Panc1 (cell line): ENCODE measurements at regions of chr12 and their contacts with region 1.

Region 1: GRCh38 chr12:26125400-26126339 is 833 bp upstream of the BHLHE41 start:
- DNase-seq: peak; percentile 94
- ATAC-seq: peak; percentile 80
- H3K4me3 ChIP-seq: peak overlapping the region; percentile 68 to 90
- H3K27ac ChIP-seq: peak overlapping the region; percentile 100
- H3K4me1 ChIP-seq: peaks cover 39% of the 10 kb centered on the region
- H3K27me3 ChIP-seq: peaks cover 5% of the 10 kb centered on the region; the same call in 1 of the 2 replicates
- CTCF ChIP-seq: no peak

Region 2: DNA sequence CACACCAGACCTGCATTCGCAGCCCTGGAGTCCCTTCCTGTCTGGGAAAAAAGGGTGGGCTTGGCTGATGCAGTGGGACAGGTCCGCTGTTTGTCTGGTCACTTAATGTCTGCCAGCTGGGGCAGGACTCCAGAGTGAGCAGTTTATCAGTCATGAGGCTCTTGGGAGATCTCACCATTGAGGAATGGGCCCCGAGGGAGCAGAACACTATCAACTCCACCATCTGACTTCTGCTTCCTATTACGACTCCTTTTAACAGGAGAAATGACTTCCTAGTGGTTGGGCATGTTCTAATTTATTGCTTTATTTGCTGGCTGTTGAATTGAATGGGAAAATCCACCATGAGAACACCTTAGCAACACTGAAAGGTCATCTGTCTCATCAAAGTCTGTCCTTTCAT is 349.7 kb before region 1 on chr12:
- CTCF ChIA-PET with region 1: no interaction called
- POLR2A ChIA-PET with region 1: no interaction called
- in situ Hi-C with region 1: no loop called
- intact Hi-C with region 1: no loop called
- DNase-seq: no peak
- ATAC-seq: peak; percentile 62; the same call in 1 of the 2 replicates
- H3K4me3 ChIP-seq: no peak overlapping the region
- H3K27ac ChIP-seq: no peak overlapping the region; the same call in 1 of the 2 replicates
- H3K4me1 ChIP-seq: 0 out of 2 replicates have a peak, but pooled peaks cover 2% of the 10 kb centered on the region
- H3K27me3 ChIP-seq: no peaks in the 10 kb centered on the region; the same call in 1 of the 2 replicates
- CTCF ChIP-seq: no peak

Region 3: DNA sequence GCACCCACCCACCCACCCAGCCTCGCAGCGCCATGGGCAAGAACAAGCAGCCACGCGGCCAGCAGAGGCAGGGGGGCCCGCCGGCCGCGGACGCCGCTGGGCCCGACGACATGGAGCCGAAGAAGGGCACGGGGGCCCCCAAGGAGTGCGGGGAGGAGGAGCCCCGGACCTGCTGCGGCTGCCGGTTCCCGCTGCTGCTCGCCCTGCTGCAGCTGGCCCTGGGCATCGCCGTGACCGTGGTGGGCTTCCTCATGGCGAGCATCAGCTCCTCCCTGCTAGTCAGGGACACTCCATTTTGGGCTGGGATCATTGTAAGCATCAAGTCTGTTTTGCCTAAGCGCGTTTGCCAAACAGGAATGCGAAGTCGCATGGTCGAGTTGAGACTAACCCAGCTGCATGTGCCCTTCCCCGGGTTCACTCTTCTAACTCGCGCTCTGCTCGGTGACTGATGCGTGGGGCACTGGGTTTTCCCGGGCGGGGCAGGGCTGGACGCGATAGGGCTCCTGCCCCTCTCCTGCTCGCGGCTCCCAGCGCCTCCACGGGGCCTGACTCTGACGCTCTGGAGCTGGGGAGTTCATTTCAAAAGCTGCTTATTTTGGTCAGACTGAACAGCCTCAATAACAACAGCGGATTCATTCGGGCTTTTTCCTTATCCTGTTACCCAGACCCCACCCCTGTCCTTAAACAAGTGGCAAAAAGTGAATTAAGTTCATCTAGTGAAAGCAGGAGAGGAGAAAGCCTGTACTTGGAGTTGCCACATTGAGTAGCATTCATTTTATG is 70.2 kb after region 1 on chr12:
- CTCF ChIA-PET with region 1: no interaction called
- POLR2A ChIA-PET with region 1: interaction called, 5 read pairs
- in situ Hi-C with region 1: no loop called
- intact Hi-C with region 1: loop called (anchors 2 kb)
- DNase-seq: peak; percentile 62
- ATAC-seq: peak; percentile 87
- H3K4me3 ChIP-seq: peak overlapping the region; percentile 52 to 74
- H3K27ac ChIP-seq: peak overlapping the region; percentile 98
- H3K4me1 ChIP-seq: peaks cover 41% of the 10 kb centered on the region
- H3K27me3 ChIP-seq: no peaks in the 10 kb centered on the region
- CTCF ChIP-seq: no peak

Region 4: GRCh38 chr12:26378711-26379110 is 253.0 kb after region 1 on chr12:
- CTCF ChIA-PET with region 1: no interaction called
- POLR2A ChIA-PET with region 1: no interaction called
- in situ Hi-C with region 1: no loop called
- intact Hi-C with region 1: no loop called
- DNase-seq: no peak
- ATAC-seq: no peak
- H3K4me3 ChIP-seq: no peak overlapping the region
- H3K27ac ChIP-seq: no peak overlapping the region
- H3K4me1 ChIP-seq: no peaks in the 10 kb centered on the region
- H3K27me3 ChIP-seq: no peaks in the 10 kb centered on the region
- CTCF ChIP-seq: no peak

Region 5: DNA sequence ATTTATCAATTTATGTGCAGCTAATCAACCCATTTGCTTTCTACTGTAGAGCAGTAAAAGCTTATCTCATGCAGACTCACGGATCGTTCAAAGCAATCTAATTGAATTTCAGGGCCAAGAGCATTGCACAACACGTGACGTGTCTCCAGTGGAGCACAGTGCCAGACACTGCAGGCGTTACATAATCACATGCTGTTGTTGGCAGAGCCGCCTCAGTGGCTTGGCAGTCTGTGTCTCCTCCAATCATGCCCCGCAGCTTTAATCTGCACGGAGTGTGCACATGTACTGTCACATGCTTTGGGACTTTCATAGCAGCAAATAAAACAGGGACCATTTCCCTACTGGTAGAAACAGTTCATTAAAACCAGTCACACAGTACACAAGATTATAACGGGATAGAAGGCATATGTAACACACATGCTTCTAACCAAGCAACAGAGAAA is 398.1 kb after region 1 on chr12:
- CTCF ChIA-PET with region 1: interaction called, 16 read pairs
- POLR2A ChIA-PET with region 1: interaction called, 11 read pairs
- in situ Hi-C with region 1: no loop called
- intact Hi-C with region 1: loop called (anchors 5 kb)
- DNase-seq: no peak
- ATAC-seq: peak; percentile 56
- H3K4me3 ChIP-seq: no peak overlapping the region
- H3K27ac ChIP-seq: peak overlapping the region; percentile 51
- H3K4me1 ChIP-seq: peaks cover 7% of the 10 kb centered on the region
- H3K27me3 ChIP-seq: no peaks in the 10 kb centered on the region
- CTCF ChIP-seq: no peak

Region 6: DNA sequence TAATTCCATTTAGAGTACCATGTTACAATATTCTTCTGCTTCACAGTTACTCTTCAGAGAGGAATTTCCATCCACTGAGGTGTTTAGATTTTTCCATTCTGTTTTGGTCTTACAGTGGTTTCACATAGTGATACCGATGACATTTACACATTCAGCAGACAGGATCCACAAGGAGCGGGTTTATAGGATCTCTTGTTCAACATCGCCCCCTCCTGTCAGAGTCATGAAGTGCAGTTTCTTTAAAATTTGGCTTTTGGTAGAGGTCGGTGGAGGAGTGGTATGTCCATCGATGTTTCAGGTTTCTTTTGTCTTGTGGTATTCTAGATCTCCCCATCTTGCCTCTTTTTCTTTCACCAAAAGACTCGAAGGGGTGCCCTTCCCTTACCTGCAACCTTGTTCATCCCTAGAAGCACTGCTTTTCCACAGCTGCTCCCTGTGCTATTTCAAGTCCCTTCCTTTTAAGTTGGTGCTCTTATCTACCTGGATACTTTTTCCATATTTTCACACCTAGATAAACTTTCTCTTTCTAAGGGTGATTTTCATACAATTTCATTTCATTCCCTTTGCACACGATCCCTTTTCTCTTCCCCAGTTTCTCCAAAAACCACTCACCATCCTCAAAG is 526.0 kb after region 1 on chr12:
- CTCF ChIA-PET with region 1: interaction called, 18 read pairs
- POLR2A ChIA-PET with region 1: no interaction called
- in situ Hi-C with region 1: no loop called
- intact Hi-C with region 1: loop called (anchors 2 kb)
- DNase-seq: peak; percentile 77
- ATAC-seq: peak; percentile 82
- H3K4me3 ChIP-seq: no peak overlapping the region
- H3K27ac ChIP-seq: peak overlapping the region; percentile 5
- H3K4me1 ChIP-seq: no peaks in the 10 kb centered on the region
- H3K27me3 ChIP-seq: no peaks in the 10 kb centered on the region
- CTCF ChIP-seq: peak; percentile 87